GM23248 (cell line): ENCODE measurements at regions of chr13 and their contacts with region 1.

Region 1: DNA sequence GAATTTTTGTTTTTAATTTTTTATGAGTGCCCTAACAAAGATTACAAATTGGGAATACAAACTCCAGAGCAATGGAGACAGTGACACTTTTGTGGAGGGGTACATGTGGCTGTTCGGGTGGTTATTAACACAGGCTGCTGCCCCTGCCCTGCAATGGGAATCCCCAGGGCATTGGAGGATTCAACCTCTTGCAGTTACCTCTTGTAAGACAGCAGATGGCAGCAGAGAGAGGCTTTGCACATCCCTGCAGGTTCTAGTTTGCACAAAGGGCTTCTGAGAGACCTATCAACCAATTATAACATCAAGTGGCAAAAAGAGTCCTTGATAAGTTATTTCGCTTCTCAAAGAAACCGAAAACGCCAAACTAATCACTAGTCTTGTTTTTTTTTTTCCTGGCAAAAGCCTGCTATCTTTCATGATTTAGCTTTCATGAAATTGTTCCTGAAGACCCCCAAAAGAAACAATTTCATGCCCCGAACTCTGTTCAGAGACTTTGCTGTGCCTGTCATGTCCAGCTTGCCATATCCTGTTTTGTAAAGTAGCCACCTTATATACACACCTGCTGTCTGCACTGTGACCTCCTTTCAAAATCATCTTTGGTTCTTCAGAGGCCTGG is 10.4 kb downstream of the GJB2 start:
- DNase-seq: peak; percentile 83
- H3K4me3 ChIP-seq: no peak overlapping the region
- H3K27ac ChIP-seq: no peak overlapping the region
- H3K4me1 ChIP-seq: no peaks in the 10 kb centered on the region
- H3K27me3 ChIP-seq: peaks cover 10% of the 10 kb centered on the region; the same call in 1 of the 2 replicates

Region 2: GRCh38 chr13:20684546-20684945 is 502.2 kb after region 1 on chr13:
- in situ Hi-C with region 1: loop called (anchors 25 kb)
- DNase-seq: peak; percentile 35
- H3K4me3 ChIP-seq: no peak overlapping the region
- H3K27ac ChIP-seq: no peak overlapping the region
- H3K4me1 ChIP-seq: peaks cover 11% of the 10 kb centered on the region
- H3K27me3 ChIP-seq: no peaks in the 10 kb centered on the region

Region 3: GRCh38 chr13:20828539-20829364 is 646.4 kb after region 1 on chr13:
- in situ Hi-C with region 1: loop called (anchors 25 kb)
- DNase-seq: peak; percentile 81
- H3K4me3 ChIP-seq: peak overlapping the region; percentile 68
- H3K27ac ChIP-seq: no peak overlapping the region
- H3K4me1 ChIP-seq: peaks cover 40% of the 10 kb centered on the region
- H3K27me3 ChIP-seq: no peaks in the 10 kb centered on the region